Activated naive CD4-positive, alpha-beta T cell treated with anti-CD3 and anti-CD28 coated beads for 36 hours (primary cell): ENCODE measurements at regions of chr1 and their contacts with region 1.

Region 1: DNA sequence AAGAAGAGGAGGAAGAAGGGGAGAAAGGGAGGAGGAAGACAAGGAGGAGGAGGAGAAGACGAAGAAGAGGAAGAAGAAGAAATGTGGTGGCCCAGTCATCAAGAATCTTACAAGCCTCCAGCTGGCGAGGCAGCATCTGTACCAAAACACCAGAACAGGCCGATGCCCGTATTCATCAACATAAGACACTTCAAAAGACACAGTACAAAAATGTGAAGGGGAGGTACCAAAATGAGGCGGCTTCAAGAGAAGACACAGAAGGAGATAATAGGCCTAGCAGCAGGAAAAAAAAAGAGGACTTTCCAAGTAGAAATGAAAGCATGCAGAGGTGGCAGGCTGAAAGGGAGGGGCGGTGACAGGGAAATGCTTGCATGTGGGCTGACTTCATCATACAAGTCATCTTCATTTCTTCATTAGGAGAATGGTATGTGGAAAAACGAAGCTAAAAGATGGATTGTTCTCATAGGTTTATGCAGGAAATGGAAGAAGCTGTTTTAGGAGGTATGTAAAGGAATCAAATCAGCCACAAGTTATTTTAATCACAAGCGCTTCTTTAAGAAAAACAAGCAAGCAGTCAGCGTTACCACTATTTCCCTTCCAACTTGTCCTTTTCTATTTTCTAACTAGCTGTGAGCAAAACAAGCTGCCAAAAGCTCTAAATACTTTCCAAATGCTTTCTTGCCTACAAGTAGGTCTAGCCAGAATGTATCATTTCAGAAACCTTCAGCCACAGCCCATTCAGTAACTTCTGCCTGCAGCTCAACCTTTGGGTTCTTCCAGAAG is 192.3 kb downstream of the SLC45A1 start:
- DNase-seq: peak; percentile 81
- H3K4me3 Mint-ChIP-seq: peak overlapping the region; percentile 54
- H3K27ac Mint-ChIP-seq: peak overlapping the region; percentile 93
- H3K4me1 Mint-ChIP-seq: peaks cover 46% of the 10 kb centered on the region
- H3K27me3 Mint-ChIP-seq: no peaks in the 10 kb centered on the region

Region 2: DNA sequence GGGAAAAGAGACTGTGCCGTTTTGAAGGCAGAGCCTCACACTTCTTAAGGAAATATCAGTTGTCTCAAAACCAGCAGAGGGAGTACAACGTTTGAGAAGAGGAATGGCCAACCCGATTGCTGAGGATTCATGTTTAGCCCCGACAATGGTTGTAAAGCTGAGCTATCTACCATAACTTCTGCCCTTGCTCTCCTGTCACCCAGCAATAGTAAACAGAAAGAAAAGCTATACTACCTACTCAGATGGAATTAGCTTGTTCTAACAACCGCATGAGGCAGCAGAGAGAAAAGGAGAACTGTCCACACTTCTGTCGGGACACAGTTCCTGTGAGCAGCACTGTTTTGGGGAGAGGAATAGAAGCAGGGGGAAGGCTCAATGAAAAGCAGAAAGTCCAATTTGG is 101.1 kb before region 1 on chr1:
- CTCF ChIA-PET with region 1: no interaction called
- intact Hi-C with region 1: no loop called
- DNase-seq: peak; percentile 36
- H3K4me3 Mint-ChIP-seq: peak overlapping the region; percentile 47
- H3K27ac Mint-ChIP-seq: peak overlapping the region; percentile 67
- H3K4me1 Mint-ChIP-seq: peaks cover 70% of the 10 kb centered on the region
- H3K27me3 Mint-ChIP-seq: no peaks in the 10 kb centered on the region

Region 3: GRCh38 chr1:8423650-8424538 is 86.3 kb before region 1 on chr1:
- CTCF ChIA-PET with region 1: interaction called, 3 read pairs
- intact Hi-C with region 1: loop called (anchors 2 kb)
- DNase-seq: peak; percentile 62
- H3K4me3 Mint-ChIP-seq: peak overlapping the region; percentile 85
- H3K27ac Mint-ChIP-seq: peak overlapping the region; percentile 97
- H3K4me1 Mint-ChIP-seq: peaks cover 38% of the 10 kb centered on the region
- H3K27me3 Mint-ChIP-seq: no peaks in the 10 kb centered on the region

Region 4: GRCh38 chr1:8540261-8540941 is 30.2 kb after region 1 on chr1:
- CTCF ChIA-PET with region 1: no interaction called
- intact Hi-C with region 1: loop called (anchors 2 kb)
- DNase-seq: no peak
- H3K4me3 Mint-ChIP-seq: no peak overlapping the region
- H3K27ac Mint-ChIP-seq: peak overlapping the region; percentile 56
- H3K4me1 Mint-ChIP-seq: peaks cover 32% of the 10 kb centered on the region
- H3K27me3 Mint-ChIP-seq: no peaks in the 10 kb centered on the region

Region 5: GRCh38 chr1:8629241-8630091 is 119.2 kb after region 1 on chr1:
- CTCF ChIA-PET with region 1: no interaction called
- intact Hi-C with region 1: no loop called
- DNase-seq: peak; percentile 37
- H3K4me3 Mint-ChIP-seq: no peak overlapping the region
- H3K27ac Mint-ChIP-seq: no peak overlapping the region
- H3K4me1 Mint-ChIP-seq: peaks cover 58% of the 10 kb centered on the region
- H3K27me3 Mint-ChIP-seq: no peaks in the 10 kb centered on the region